PC-9 (cell line): ENCODE measurements at regions of chr1 and their contacts with region 1.

Region 1: DNA sequence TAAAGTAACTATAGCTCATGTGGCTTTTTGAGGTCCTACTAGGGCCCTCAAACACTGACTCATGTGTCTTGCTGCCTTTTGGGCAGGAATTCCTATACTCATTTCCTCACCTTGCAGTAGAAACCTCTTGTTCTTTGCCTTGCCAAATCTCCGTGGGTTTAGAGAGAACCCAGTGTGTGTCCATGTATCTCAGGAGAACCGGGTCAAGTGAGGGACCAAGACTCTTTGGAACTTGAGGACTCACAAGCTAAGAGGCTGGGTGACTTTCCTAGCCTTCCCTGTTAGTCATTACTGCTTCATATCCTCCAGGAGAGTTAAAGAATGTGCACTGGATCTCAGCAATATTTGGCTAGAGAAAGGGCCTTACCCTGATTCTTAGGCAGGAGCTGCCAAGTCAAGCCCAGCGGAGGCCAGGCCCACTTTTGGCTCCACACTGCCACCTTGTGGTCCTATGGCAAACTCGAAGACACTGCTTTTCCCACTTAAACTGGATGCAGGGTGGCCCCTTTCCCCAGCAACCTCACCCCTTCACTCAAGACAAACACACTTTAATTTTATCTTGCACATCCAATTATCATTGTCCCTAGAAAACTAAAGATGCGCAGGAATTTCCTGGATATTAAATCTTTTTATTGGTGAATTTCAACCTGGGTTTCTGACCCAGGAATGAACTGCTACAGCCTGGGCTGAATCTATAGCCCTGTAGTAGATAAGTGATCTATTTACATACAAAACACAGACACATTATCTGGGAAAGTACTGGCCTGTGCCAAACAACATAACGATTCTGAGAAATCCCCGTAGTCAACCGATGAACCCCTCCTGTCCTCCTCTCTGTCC is 10.6 kb downstream of the AVPR1B start:
- DNase-seq: peak; percentile 73 to 74
- H3K4me3 ChIP-seq: no peak overlapping the region
- H3K27ac ChIP-seq: no peak overlapping the region
- H3K4me1 ChIP-seq: 0 out of 2 replicates have a peak, but pooled peaks cover 5% of the 10 kb centered on the region
- H3K27me3 ChIP-seq: no peaks in the 10 kb centered on the region
- CTCF ChIP-seq: peak; percentile 92

Region 2: GRCh38 chr1:205664376-205665108 is 442.0 kb before region 1 on chr1:
- CTCF ChIA-PET with region 1: no interaction called
- POLR2A ChIA-PET with region 1: no interaction called
- intact Hi-C with region 1: loop called (anchors 5 kb)
- DNase-seq: peak; percentile 81 to 95
- H3K4me3 ChIP-seq: peak overlapping the region; percentile 47; the same call in 1 of the 2 replicates
- H3K27ac ChIP-seq: peak overlapping the region; percentile 90
- H3K4me1 ChIP-seq: peaks cover 81% of the 10 kb centered on the region
- H3K27me3 ChIP-seq: no peaks in the 10 kb centered on the region
- CTCF ChIP-seq: no peak

Region 3: DNA sequence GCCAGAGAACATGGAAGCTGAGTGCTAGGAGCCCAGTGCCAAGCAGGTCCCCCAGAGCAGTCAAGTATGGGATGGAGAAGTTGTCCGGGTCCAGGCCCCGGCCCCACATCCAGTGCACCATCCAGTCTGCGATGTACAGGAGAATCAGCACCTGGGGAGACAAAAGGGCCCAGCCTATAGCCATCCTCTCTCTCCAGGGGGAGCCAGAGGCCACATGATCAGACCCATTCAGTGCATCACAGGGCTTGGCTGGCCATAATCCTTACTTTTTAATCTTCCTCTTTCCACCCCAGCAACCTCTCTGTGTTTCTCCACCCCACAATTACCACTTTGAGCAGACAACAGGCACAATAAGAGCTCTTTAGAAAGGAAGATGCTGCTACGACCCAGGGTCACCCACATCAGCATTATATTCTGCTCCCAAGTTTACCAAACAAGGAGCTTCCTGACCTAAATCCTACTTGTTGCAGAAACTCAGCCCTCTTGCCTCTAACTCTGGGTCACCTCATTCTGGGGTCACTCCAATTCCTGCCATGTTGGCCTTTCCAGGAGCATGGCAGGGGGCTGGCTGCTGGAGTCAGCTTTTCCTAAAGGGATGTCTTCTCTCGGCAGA is 314.9 kb before region 1 on chr1:
- CTCF ChIA-PET with region 1: interaction called, 4 read pairs
- POLR2A ChIA-PET with region 1: no interaction called
- intact Hi-C with region 1: loop called (anchors 1 kb)
- DNase-seq: peak in 1 of 2 experiments; percentile 63
- H3K4me3 ChIP-seq: no peak overlapping the region
- H3K27ac ChIP-seq: no peak overlapping the region
- H3K4me1 ChIP-seq: no peaks in the 10 kb centered on the region
- H3K27me3 ChIP-seq: no peaks in the 10 kb centered on the region
- CTCF ChIP-seq: peak; percentile 86

Region 4: GRCh38 chr1:205919026-205919746 is 187.4 kb before region 1 on chr1:
- CTCF ChIA-PET with region 1: no interaction called
- POLR2A ChIA-PET with region 1: no interaction called
- intact Hi-C with region 1: loop called (anchors 1 kb)
- DNase-seq: peak; percentile 66 to 76
- H3K4me3 ChIP-seq: no peak overlapping the region
- H3K27ac ChIP-seq: no peak overlapping the region
- H3K4me1 ChIP-seq: no peaks in the 10 kb centered on the region
- H3K27me3 ChIP-seq: no peaks in the 10 kb centered on the region
- CTCF ChIP-seq: peak; percentile 97

Region 5: DNA sequence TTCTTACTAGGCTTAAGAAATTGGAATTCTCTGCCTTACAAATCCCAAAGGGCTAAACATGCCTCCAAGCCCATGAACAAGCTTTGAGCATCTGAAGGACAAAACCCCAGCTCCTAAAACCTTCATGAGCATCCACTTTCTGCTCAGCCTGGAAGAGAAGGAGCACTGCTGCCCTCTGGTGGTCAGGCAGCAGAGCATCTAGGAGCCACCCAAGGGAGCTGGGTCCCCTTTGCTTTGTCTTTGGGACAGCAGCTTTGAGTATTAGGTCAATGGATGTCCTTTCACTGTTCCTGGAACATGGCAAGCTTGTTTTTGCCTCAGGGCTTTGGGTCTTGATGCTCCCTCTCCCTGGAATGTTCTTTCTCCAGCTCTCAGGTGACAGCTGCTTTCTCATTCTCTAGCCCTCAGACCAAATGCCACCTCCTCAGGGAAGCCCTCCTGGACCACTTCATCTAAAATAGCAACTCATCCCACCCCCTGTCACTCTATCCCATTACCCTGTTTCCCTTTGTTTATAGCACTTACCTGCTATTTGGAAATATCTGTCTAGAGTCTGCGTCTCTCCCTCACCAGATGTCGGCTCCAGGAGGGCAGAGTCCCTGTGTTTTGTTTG is 129.0 kb before region 1 on chr1:
- CTCF ChIA-PET with region 1: interaction called, 12 read pairs
- POLR2A ChIA-PET with region 1: no interaction called
- intact Hi-C with region 1: no loop called
- DNase-seq: peak; percentile 74 to 75
- H3K4me3 ChIP-seq: no peak overlapping the region
- H3K27ac ChIP-seq: no peak overlapping the region
- H3K4me1 ChIP-seq: peaks cover 27% of the 10 kb centered on the region
- H3K27me3 ChIP-seq: no peaks in the 10 kb centered on the region
- CTCF ChIP-seq: peak; percentile 98

Region 6: GRCh38 chr1:205983925-205984725 is 122.4 kb before region 1 on chr1:
- CTCF ChIA-PET with region 1: interaction called, 12 read pairs
- POLR2A ChIA-PET with region 1: no interaction called
- intact Hi-C with region 1: loop called (anchors 1 kb)
- DNase-seq: peak; percentile 59 to 91
- H3K4me3 ChIP-seq: no peak overlapping the region
- H3K27ac ChIP-seq: no peak overlapping the region
- H3K4me1 ChIP-seq: peaks cover 18% of the 10 kb centered on the region
- H3K27me3 ChIP-seq: no peaks in the 10 kb centered on the region
- CTCF ChIP-seq: peak; percentile 79

Region 7: DNA sequence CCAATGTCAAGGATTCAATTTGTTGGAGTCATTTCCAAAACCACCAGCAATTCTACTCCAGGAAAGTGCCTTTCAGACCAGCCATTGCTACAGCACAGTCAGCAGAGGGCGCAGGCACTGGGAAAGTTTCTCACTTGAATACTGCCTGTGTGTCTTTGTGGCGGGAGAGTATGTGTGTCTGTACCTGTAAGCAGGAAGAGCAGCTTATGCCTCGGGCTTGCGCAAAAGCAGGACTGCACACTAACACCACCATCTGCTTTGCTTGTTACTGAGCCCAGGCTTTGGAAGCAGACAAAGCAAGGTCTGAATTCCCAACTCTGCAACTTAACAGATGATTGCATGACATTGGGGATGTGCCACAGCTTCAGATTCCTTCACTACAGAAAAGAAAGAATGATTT is 75.8 kb before region 1 on chr1:
- CTCF ChIA-PET with region 1: interaction called, 6 read pairs
- POLR2A ChIA-PET with region 1: interaction called, 4 read pairs
- intact Hi-C with region 1: loop called (anchors 1 kb)
- DNase-seq: peak; percentile 72 to 79
- H3K4me3 ChIP-seq: no peak overlapping the region
- H3K27ac ChIP-seq: no peak overlapping the region
- H3K4me1 ChIP-seq: peaks cover 5% of the 10 kb centered on the region; the same call in 1 of the 2 replicates
- H3K27me3 ChIP-seq: no peaks in the 10 kb centered on the region
- CTCF ChIP-seq: peak; percentile 84